Calu3 (cell line): ENCODE measurements at regions of chr20 and their contacts with region 1.

Region 1: GRCh38 chr20:10381493-10381892 is 52.5 kb downstream of the MKKS start:
- DNase-seq: no peak
- H3K4me3 Mint-ChIP-seq: no peak overlapping the region
- H3K27ac Mint-ChIP-seq: no peak overlapping the region
- H3K4me1 Mint-ChIP-seq: peaks cover 4% of the 10 kb centered on the region
- H3K27me3 Mint-ChIP-seq: no peaks in the 10 kb centered on the region
- CTCF ChIP-seq: no peak

Region 2: GRCh38 chr20:10316582-10316981 is 64.9 kb before region 1 on chr20:
- CTCF ChIA-PET with region 1: no interaction called
- intact Hi-C with region 1: loop called (anchors 5 kb)
- DNase-seq: peak; percentile 3
- H3K4me3 Mint-ChIP-seq: no peak overlapping the region
- H3K27ac Mint-ChIP-seq: no peak overlapping the region
- H3K4me1 Mint-ChIP-seq: no peaks in the 10 kb centered on the region
- H3K27me3 Mint-ChIP-seq: peaks cover 16% of the 10 kb centered on the region
- CTCF ChIP-seq: no peak